ENCODE measurements at regions of chr10 and their contacts with region 1.

Region 1: DNA sequence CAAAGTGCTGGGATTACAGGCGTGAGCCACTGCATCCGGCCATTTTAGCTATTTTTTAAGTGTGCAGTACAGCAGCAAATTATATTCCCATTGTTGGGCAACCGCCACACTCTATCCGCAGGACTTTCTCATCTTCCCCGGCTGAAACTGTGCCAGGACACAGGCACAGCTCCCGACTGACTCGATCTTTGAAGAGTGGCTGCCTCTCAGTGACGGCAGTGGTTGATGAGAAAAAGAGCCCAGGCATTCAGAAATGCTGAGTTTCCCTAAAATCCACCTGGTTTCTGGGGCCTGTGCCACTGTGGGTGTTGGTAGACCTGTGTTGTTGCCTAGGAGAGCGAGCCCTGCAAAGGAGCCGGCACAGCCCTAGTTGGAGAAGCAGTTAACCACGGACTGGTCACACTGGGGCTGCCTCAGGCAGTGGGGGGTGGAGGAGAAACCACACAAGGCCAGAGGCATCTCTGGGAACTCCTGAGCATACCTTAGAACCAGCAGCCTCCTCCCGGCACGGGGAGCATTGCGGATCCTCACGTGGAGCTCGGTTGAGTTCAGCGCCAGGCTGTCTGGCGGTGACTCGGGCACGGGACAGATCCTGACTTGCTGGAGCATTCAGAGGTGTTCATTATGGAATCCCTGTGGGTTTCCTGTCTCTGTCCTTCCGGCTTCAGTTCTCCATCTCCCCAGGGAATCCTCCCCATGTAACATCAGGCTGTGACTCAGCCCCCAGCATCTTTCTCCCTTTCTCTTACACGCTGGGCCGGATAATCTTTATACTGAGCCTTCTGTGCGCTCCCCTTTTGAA is 16.2 kb downstream of the PFKFB3 start:
- DNase-seq: peak; percentile 100
- H3K4me3 ChIP-seq: no peak overlapping the region
- H3K27ac ChIP-seq: peak overlapping the region; percentile 84
- H3K4me1 ChIP-seq: peaks cover 36% of the 10 kb centered on the region
- H3K27me3 ChIP-seq: no peaks in the 10 kb centered on the region
- CTCF ChIP-seq: no peak

Region 2: DNA sequence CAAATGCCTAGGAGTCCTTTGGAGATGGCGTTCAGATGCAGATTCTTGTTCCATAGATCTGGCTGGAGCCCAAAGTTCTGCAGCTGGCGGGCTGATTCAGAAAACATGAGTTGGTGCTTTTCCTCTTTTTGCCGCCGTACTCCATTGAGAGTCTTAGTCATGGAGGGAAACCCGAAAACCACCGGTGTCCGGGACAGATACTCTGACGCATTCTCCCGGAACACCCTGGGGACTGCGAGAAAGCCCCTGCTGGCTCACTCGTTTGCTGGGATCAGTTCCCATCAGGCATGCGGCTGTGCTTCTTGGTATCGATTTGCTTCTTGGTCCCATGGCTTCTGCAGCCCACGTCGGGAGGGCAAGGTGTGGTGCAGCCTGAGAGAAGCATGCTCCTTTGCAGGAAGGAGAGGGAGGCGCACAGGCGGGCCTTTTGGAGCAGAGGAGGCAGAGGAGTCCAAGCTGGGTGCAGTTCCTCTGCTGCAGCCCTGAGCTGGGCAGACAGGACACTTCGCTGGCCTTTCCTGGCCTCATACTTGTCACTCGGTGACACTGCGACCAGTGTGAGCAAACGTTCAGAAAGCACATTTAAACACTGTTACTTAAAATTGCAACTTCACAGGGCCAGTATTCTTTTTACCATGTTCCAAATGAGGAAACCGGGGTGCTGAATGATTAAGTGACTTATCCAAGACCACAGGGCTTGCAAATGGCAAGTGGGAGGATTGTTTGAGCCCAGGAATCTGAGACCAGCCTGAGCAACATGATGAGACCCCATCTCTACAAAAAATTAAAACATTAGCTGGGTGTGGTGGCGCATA is 46.8 kb before region 1 on chr10:
- CTCF ChIA-PET with region 1: no interaction called
- dilution Hi-C with region 1: no loop called
- in situ Hi-C with region 1: no loop called
- intact Hi-C with region 1: no loop called
- DNase-seq: no peak
- H3K4me3 ChIP-seq: no peak overlapping the region
- H3K27ac ChIP-seq: no peak overlapping the region
- H3K4me1 ChIP-seq: peaks cover 14% of the 10 kb centered on the region
- H3K27me3 ChIP-seq: no peaks in the 10 kb centered on the region
- CTCF ChIP-seq: no peak

Region 3: GRCh38 chr10:6275022-6275997 is 56.4 kb after region 1 on chr10:
- CTCF ChIA-PET with region 1: interaction called, 3 read pairs
- dilution Hi-C with region 1: no loop called
- in situ Hi-C with region 1: loop called in 1 of 2 experiments (anchors 5 kb)
- intact Hi-C with region 1: loop called (anchors 1 kb)
- DNase-seq: peak; percentile 99
- H3K4me3 ChIP-seq: peak overlapping the region in 1 of 3 experiments; percentile 34
- H3K27ac ChIP-seq: peak overlapping the region; percentile 84
- H3K4me1 ChIP-seq: peaks cover 27% of the 10 kb centered on the region
- H3K27me3 ChIP-seq: no peaks in the 10 kb centered on the region
- CTCF ChIP-seq: no peak

Region 4: GRCh38 chr10:6396652-6397051 is 177.8 kb after region 1 on chr10:
- CTCF ChIA-PET with region 1: interaction called, 10 read pairs
- dilution Hi-C with region 1: no loop called
- in situ Hi-C with region 1: loop called in 1 of 2 experiments (anchors 10 kb)
- intact Hi-C with region 1: loop called (anchors 5 kb)
- DNase-seq: peak; percentile 80
- H3K4me3 ChIP-seq: no peak overlapping the region
- H3K27ac ChIP-seq: no peak overlapping the region
- H3K4me1 ChIP-seq: peaks cover 17% of the 10 kb centered on the region
- H3K27me3 ChIP-seq: no peaks in the 10 kb centered on the region
- CTCF ChIP-seq: no peak